KBM-7 (cell line): ENCODE measurements at regions of chr20 and their contacts with region 1.

Region 1: DNA sequence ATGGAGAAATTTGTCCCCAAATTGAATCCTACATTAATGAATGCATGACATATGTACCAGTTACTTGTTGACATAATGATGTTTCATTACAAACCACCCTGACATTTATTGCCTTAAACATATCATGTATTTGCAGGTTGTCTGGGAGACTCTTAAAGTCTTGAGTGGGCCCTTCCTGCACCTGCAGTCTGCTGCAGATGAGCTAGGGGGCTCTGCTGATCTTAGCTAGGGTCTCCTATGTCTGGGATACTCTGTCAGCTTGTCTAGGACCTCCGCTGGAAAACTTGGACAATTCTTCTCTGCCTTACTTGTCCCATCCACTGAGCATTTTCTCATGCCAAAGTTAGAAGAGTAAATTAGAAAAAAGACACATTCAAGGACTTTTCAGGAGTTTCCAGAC is 581.6 kb downstream of the HAO1 start:
- DNase-seq: no peak

Region 2: GRCh38 chr20:6956574-6956973 is 402.1 kb before region 1 on chr20:
- in situ Hi-C with region 1: no loop called
- DNase-seq: no peak

Region 3: GRCh38 chr20:7272512-7272911 is 86.2 kb before region 1 on chr20:
- in situ Hi-C with region 1: loop called (anchors 25 kb)
- DNase-seq: no peak

Region 4: GRCh38 chr20:7980332-7981046 is 621.8 kb after region 1 on chr20:
- in situ Hi-C with region 1: no loop called
- DNase-seq: peak; percentile 50